Left colon (tissue), 2 donors: ENCODE measurements at regions of chr10 and their contacts with region 1.

Region 1: GRCh38 chr10:102009801-102010425 is 46.1 kb downstream of the ARMH3 start:
- DNase-seq: peak in 1 of 2 donors; percentile 16
- ATAC-seq: peak; percentile 98

Region 2: GRCh38 chr10:101840741-101841453 is 169.0 kb before region 1 on chr10:
- intact Hi-C with region 1: loop called in 1 of 2 experiments (anchors 10 kb)
- DNase-seq: peak; percentile 65 to 77
- ATAC-seq: peak; percentile 85

Region 3: DNA sequence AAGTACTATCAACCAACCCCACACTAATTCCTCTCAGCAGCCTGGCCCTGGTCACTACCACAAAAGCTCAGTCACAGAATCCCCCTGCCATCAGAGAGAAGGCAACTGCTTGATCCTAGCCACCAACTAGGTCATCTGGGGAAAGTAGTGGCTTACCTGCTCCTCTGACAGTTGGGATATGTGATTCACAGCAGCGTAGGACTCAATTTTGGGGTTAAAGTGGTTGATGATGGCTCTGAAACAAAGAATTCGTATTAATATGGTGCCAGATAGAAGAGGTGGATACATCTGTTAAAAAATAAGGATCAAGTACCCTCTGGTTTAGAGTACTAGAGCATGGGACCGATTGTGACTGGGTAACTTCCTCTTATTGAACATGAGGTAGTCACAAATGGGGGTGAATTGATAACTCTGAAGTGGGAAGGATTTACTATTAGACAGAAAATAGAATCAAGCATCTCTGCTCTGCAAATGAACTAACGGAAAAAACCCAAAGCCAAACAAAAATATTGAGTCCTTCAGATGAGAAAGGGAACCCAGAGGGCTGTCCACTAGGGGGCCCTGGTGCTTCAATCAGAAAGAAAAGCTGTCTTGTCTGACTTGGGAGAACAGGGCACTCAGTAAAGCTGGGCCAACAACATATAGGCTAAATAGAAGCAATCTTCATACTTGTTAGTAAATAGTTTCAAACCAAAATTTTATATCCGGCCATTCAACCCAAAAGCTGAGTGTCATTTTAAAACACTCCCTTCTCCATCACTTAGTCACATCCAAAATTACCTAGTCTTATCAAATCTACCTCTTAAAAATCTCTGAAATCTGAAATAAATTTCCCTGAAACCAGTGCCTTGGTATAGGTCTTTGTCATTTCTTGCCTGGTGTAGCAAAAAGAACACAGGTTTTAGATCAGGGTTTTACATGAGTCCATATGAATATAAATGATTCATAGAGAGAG is 120.4 kb before region 1 on chr10:
- intact Hi-C with region 1: loop called in 1 of 2 experiments (anchors 10 kb)
- DNase-seq: peak; percentile 42 to 87
- ATAC-seq: peak; percentile 73

Region 4: DNA sequence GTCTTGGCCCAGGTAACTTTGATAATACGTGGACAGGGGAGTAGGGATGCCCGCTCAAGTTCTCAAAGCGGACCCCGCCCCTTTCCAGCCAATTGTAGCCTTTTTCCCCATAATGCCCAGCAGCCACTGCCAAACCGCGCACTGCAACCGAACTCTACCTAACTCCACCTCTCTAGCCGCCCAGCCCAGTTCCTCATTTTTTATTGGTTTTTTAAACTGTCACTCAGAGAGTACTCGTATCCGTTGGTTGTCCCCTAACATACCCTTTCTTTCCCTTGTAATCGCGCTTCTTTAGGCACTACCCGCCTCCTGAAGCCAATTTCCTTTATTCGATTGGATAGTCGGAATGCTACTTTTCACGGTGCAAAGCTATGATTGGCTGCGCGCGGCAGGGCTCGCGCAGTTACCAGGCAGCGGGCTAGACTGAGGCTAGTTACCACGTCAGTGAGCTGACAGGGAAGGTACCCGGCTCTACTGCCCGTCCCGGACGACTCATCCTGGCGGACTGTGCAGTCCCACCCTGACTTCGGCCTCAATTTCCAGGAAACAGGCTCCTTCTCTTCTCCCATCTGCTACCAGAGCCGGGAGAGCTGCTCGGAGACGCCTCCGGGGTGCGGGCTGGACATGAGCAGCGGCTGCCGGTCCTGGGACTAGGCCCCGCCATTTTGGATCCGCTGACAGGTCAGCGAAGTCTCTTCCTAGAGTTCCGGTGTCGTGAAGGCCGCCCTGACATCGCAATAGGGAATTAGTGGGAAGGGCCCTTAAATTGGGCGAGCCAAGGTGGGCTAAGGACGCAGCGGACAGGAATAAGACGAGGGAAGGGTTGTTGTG is 235.4 kb after region 1 on chr10 and contains the start of gene GBF1:
- intact Hi-C with region 1: no loop called
- DNase-seq: peak; percentile 91 to 93
- ATAC-seq: peak; percentile 82
- total RNA-seq, gene GBF1: 52.3 to 64.3 TPM